A549 (cell line): ENCODE measurements at regions of chr16 and their contacts with region 1.

Region 1: GRCh38 chr16:84726079-84726668 is 26.4 kb downstream of the USP10 start:
- DNase-seq: peak; percentile 58 to 85
- ATAC-seq: peak; percentile 84 to 86
- H3K4me3 ChIP-seq: 0 out of 3 replicates have a peak overlapping the region, but pooled peaks have one; percentile 20
- H3K27ac ChIP-seq: peak overlapping the region; percentile 50 to 92
- H3K4me1 ChIP-seq: peaks cover 69% of the 10 kb centered on the region
- CTCF ChIP-seq: peak; percentile 97
- EP300 ChIP-seq: no peak
- POLR2A ChIP-seq: no peak
- RAD21 ChIP-seq: peak; percentile 83 to 88

Region 2: DNA sequence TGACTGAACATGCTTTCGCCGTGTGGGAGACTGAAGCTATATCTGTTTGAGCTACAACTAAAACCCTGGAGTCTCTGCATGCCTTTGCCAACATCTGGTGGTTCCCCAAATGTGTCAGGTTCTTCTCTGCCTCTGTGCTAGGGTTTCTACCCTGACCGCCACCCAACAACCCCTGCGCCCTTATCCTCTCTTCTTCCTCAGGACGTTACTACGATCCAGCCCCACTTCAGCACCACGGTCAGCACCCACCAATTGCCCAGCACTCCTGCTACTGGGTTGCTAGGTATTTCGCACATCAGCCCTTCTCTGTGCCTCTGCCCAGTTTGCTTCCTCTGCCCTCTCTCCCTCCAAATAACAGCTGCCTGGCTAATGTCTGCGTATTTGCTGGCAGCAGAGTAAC is 1024.7 kb before region 1 on chr16:
- CTCF ChIA-PET with region 1: no interaction called
- POLR2A ChIA-PET with region 1: no interaction called
- DNase-seq: peak in 1 of 2 experiments; percentile 29
- ATAC-seq: peak; percentile 55 to 66; a peak in 5 of 6 replicates
- H3K4me3 ChIP-seq: no peak overlapping the region
- H3K27ac ChIP-seq: no peak overlapping the region
- H3K4me1 ChIP-seq: no peaks in the 10 kb centered on the region
- CTCF ChIP-seq: no peak
- EP300 ChIP-seq: no peak
- POLR2A ChIP-seq: no peak
- RAD21 ChIP-seq: no peak

Region 3: GRCh38 chr16:84459941-84460405 is 266.2 kb before region 1 on chr16:
- CTCF ChIA-PET with region 1: no interaction called
- POLR2A ChIA-PET with region 1: no interaction called
- DNase-seq: no peak
- ATAC-seq: peak in 1 of 2 experiments; percentile 21; a peak in 3 of 6 replicates
- H3K4me3 ChIP-seq: no peak overlapping the region
- H3K27ac ChIP-seq: no peak overlapping the region
- H3K4me1 ChIP-seq: no peaks in the 10 kb centered on the region
- CTCF ChIP-seq: no peak
- EP300 ChIP-seq: no peak
- POLR2A ChIP-seq: no peak
- RAD21 ChIP-seq: no peak

Region 4: DNA sequence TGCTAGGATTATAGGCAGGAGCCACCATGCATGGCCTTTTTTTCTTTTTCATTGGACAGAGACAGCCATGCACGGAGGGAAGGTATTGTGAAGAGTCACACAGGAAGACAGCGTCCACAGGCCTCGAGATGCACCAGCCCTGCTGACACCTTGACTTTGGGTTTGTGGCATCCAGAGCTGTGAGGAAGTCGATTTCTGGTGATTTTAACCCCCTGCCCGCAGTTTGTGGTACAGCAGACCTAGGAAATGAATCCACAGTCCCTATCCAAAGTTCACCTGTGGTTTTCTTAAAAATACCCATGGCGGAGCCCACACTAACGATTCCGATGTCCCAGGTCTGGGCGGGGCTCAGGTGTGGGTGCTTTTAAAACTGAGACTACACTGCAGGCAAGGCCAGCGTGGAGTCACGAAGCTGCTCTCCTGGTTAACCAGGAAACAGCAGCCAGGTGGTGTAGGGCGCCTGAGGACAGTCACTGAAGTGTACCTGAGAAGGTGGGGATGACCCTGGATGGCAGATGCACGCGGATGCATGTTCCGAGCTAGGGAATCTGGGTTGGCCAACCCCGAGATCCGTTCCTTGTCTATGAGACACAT is 207.3 kb before region 1 on chr16:
- CTCF ChIA-PET with region 1: interaction called, 17 read pairs
- POLR2A ChIA-PET with region 1: no interaction called
- DNase-seq: no peak
- ATAC-seq: no peak
- H3K4me3 ChIP-seq: no peak overlapping the region
- H3K27ac ChIP-seq: peak overlapping the region in 1 of 2 experiments; percentile 34; a peak in 1 of 6 replicates
- H3K4me1 ChIP-seq: no peaks in the 10 kb centered on the region
- CTCF ChIP-seq: no peak
- EP300 ChIP-seq: no peak
- POLR2A ChIP-seq: no peak
- RAD21 ChIP-seq: no peak

Region 5: DNA sequence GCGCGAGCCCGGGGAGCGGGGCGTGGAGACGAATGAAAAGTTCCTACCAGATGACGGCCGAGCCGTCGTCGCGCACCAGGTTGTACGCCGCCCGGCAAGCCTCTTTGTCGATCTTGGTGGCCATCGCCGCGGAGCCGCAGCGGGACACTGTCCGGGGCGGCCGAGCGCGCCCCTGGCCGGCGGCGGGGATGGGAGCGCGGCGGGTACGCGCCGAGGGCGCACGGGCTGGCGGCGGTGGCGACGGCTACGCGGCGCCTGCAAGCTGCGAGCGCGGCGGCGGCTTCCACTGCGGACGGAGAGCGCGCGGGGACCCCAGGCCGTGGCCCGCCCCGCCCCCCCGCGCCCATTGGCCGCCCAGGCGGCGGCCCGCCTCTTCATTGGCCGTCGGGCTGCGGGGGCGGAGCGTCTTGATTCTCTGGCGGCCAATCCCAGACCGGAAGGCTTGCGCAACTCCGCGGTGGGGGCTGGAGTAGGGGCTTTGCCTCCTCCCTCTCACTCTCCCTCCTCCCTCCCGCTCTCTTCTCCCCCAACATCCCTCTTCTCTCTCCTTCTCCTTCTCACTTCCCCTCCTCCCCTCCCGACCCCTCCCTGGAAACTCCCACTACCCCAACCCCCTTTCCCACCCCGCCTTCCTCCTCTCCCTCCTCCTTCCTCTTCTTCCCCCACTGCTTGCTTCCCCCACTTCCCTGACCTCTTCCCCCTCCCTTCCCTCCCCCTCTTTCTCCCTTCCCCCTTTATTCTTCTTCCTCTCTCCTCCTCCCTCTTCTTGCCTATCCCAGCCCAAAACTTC is 108.2 kb before region 1 on chr16 and contains the start of gene COTL1:
- CTCF ChIA-PET with region 1: interaction called, 45 read pairs
- POLR2A ChIA-PET with region 1: interaction called, 6 read pairs
- DNase-seq: peak; percentile 88 to 98
- ATAC-seq: peak; percentile 63 to 69
- H3K4me3 ChIP-seq: peak within 1 kb of the TSS; percentile 92
- H3K27ac ChIP-seq: peak within 1 kb of the TSS; percentile 82 to 98
- H3K4me1 ChIP-seq: peaks cover 49% of the 10 kb centered on the region
- CTCF ChIP-seq: no peak
- EP300 ChIP-seq: no peak
- POLR2A ChIP-seq: peak; percentile 99
- RAD21 ChIP-seq: no peak
- polyA plus RNA-seq, gene COTL1: 89.7 and 94.1 TPM in 2 replicates

Region 6: GRCh38 chr16:84656649-84657048 is 69.5 kb before region 1 on chr16:
- CTCF ChIA-PET with region 1: interaction called, 13 read pairs
- POLR2A ChIA-PET with region 1: no interaction called
- DNase-seq: no peak
- ATAC-seq: no peak
- H3K4me3 ChIP-seq: no peak overlapping the region
- H3K27ac ChIP-seq: no peak overlapping the region
- H3K4me1 ChIP-seq: no peaks in the 10 kb centered on the region
- CTCF ChIP-seq: no peak
- EP300 ChIP-seq: no peak
- POLR2A ChIP-seq: no peak
- RAD21 ChIP-seq: no peak

Region 7: DNA sequence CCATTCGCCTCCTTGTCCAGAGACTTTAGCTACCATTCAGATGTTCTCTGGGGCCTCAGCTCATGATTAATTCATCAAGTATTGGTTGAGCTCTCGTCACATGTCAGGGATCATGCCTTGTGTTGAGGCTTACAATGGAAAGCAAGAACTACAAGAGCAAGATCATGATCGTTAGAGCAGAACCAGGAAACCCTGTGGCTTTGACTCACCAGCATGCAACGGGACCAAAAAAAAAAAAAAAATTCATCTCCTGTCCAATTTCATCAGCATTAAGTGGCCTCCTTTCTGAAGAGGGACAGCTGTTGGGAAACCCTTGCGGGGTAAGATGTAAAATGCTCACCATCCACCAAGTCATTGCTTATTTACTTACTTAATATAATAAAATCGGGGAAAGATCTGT is 38.5 kb before region 1 on chr16:
- CTCF ChIA-PET with region 1: interaction called, 25 read pairs
- POLR2A ChIA-PET with region 1: no interaction called
- DNase-seq: no peak
- ATAC-seq: no peak
- H3K4me3 ChIP-seq: no peak overlapping the region
- H3K27ac ChIP-seq: no peak overlapping the region
- H3K4me1 ChIP-seq: no peaks in the 10 kb centered on the region
- CTCF ChIP-seq: no peak
- EP300 ChIP-seq: no peak
- POLR2A ChIP-seq: no peak
- RAD21 ChIP-seq: no peak

Region 8: DNA sequence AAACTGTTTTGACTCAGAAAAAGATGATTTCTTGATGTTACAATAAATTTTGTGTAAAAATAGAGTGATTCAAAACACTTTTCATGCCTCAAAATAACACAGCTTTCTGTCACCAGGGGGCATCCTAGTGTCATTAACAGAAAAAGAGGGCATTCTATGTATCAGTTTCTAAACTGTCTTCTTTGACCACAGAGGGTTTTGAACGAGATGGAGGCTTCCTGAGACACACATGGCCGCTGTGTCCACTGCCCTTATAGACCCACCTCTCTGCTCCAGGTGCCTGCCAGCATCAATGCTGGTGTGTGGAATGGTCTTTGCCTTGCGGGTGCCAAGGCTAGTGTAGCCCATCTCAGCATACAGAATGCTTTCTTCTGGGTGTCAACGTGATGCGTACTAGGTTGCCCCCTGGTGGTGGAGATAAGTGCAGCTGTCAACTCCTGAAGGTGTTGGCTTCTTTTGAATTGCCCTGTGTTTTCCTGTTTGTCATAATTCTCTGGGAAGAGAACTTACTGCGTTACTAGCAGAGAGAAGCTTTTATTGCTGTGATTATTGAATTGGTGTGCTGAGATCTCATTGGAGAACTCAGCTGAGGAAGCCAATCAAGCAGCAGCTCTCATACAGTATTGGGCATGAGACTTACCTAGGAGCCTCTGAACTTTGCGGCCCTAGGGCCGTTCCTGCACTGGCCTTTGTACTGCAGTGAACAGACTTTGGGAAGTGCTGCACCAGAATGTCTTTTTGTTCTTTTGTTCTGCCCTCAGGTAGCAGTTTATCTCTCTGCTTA is 12.3 kb after region 1 on chr16:
- CTCF ChIA-PET with region 1: interaction called, 141 read pairs
- POLR2A ChIA-PET with region 1: interaction called, 4 read pairs
- DNase-seq: peak; percentile 84 to 86
- ATAC-seq: peak; percentile 91
- H3K4me3 ChIP-seq: no peak overlapping the region
- H3K27ac ChIP-seq: no peak overlapping the region; a peak in 1 of 6 replicates
- H3K4me1 ChIP-seq: peaks cover 79% of the 10 kb centered on the region
- CTCF ChIP-seq: peak; percentile 95
- EP300 ChIP-seq: no peak
- POLR2A ChIP-seq: no peak
- RAD21 ChIP-seq: peak; percentile 69 to 70

Region 9: DNA sequence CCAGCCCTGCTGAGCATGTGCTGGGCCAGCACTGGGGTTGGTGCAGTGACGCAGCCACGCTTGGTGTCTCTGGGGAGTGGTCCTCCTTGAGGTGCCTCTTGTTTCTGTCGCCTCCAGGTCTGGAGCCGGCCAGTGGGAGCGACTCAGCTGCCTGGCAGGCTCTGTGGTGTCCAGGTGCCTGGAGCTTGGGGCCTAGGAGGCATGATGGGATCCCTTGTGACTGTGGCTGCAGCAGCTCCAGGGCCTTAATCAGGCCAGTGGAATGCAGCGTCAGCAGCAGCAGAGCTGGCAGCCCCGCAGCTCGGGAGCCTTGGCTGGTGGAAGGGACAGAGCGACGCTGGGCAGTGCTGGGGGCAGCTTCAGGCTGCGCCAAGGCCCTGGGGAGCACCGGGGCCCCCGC is 460.8 kb after region 1 on chr16:
- CTCF ChIA-PET with region 1: no interaction called
- POLR2A ChIA-PET with region 1: no interaction called
- DNase-seq: no peak
- ATAC-seq: no peak; a peak in 1 of 6 replicates
- H3K4me3 ChIP-seq: no peak overlapping the region
- H3K27ac ChIP-seq: no peak overlapping the region
- H3K4me1 ChIP-seq: no peaks in the 10 kb centered on the region
- CTCF ChIP-seq: no peak
- EP300 ChIP-seq: no peak
- POLR2A ChIP-seq: no peak
- RAD21 ChIP-seq: no peak